Left ventricle myocardium inferior (tissue), 1 donor: ENCODE measurements at regions of chr1 and their contacts with region 1.

Region 1: DNA sequence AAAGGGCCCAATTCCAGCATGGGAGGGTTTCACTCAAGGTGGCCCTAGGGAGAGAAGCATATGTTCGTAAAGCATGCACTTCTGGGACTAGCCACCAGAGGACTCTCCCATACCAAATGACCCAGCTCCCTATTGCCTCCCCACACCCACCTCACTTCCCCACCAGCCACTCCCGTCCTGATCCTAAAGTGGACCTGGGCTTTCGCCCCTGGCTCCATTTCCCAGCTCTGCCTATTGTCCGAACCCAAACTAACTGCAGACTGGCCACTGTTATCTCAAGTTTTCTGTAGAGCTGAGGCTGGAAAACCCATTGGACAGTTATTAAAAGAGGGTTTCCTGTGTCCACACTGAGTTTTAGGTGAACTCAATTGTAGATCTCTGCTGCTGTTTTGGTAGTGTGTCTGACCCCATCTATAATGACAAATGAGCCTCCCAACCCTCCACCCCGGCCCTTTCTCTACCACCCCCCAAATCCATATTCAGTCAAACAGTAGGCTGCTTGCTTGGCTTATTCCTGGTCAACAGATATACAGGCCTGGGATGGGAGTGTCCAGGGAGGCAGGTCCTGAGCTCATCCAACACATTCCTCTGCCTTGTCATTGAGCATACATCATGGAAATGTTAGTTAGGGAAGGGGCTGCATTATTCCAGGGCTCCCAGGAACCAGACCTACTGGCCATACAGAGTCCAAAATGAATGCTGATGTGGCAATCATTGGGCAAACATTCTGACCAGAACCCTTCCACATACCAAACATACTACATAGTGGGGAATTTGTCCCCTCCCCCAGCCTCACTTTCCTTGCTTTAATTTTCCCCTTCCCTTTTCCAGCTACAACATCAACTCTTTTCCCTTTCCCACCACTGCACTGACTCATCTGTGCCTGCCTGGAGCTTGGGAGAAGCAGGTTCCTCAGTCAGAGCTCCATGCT is 59.2 kb downstream of the ABCA4 start:
- DNase-seq: peak; percentile 56
- H3K4me3 ChIP-seq: no peak overlapping the region
- H3K27ac ChIP-seq: peak overlapping the region; percentile 77
- H3K4me1 ChIP-seq: peaks cover 68% of the 10 kb centered on the region
- H3K27me3 ChIP-seq: no peaks in the 10 kb centered on the region
- CTCF ChIP-seq: peak; percentile 91

Region 2: GRCh38 chr1:93938466-93939145 is 123.2 kb before region 1 on chr1:
- intact Hi-C with region 1: no loop called
- DNase-seq: no peak
- H3K4me3 ChIP-seq: no peak overlapping the region
- H3K27ac ChIP-seq: no peak overlapping the region
- H3K4me1 ChIP-seq: no peaks in the 10 kb centered on the region
- H3K27me3 ChIP-seq: no peaks in the 10 kb centered on the region
- CTCF ChIP-seq: no peak

Region 3: GRCh38 chr1:94218332-94218731 is 156.6 kb after region 1 on chr1:
- intact Hi-C with region 1: loop called (anchors 10 kb)
- DNase-seq: no peak
- H3K4me3 ChIP-seq: no peak overlapping the region
- H3K27ac ChIP-seq: peak overlapping the region; percentile 74
- H3K4me1 ChIP-seq: peaks cover 86% of the 10 kb centered on the region
- H3K27me3 ChIP-seq: no peaks in the 10 kb centered on the region
- CTCF ChIP-seq: no peak

Region 4: GRCh38 chr1:94237291-94238226 is 175.8 kb after region 1 on chr1 and contains the start of gene ARHGAP29:
- intact Hi-C with region 1: loop called (anchors 5 kb)
- DNase-seq: peak; percentile 89
- H3K4me3 ChIP-seq: peak within 1 kb of the TSS; percentile 80
- H3K27ac ChIP-seq: peak within 1 kb of the TSS; percentile 97
- H3K4me1 ChIP-seq: peaks cover 78% of the 10 kb centered on the region
- H3K27me3 ChIP-seq: no peaks in the 10 kb centered on the region
- CTCF ChIP-seq: no peak
- total RNA-seq, gene ARHGAP29: 26.5 TPM